Activated CD4-positive, alpha-beta memory T cell treated with anti-CD3 and anti-CD28 coated beads, Interleukin-2, amount 10 ng/mL, durations not matched to agents 7 days and 5 days (primary cell): ENCODE measurements at regions of chr6 and their contacts with region 1.

Region 1: DNA sequence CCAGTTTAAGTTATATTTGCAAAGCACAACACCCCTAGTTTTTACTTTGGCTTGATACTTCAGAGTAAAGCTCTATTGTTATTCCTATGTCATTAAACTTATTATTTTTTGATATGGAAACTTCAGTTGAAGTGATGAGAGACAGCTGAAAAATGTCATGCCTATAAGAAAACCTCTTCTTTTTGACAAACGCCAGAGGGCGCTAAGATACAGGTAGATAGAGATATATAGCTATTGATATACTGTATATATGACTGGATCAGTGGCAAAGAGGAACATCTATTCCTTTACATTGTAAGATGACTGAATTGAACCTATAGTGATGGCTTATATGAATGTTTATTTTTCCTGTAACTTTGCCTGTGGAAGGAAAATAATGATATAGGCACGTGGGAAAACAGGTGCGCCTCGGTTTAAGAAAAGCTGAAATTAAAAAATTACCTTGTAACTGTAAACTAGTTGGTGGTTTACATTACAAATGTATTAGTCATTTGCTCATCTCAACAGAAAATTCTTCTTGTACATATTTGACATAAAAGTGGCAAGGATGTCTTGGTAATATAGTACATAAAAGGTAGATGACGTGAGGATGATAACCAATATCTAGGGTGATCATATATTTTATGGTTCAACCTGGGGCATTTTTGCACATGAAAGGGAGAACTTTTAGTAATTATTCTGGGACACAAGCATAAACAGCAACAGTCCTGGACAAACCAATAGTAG is 74.1 kb downstream of the LAMA4 start:
- DNase-seq: peak; percentile 53
- H3K4me3 Mint-ChIP-seq: no peak overlapping the region
- H3K27ac Mint-ChIP-seq: no peak overlapping the region
- H3K4me1 Mint-ChIP-seq: no peaks in the 10 kb centered on the region
- H3K27me3 Mint-ChIP-seq: peaks cover 52% of the 10 kb centered on the region

Region 2: GRCh38 chr6:112163295-112164257 is 16.7 kb before region 1 on chr6:
- CTCF ChIA-PET with region 1: interaction called, 11 read pairs
- POLR2A ChIA-PET with region 1: no interaction called
- DNase-seq: peak; percentile 77
- H3K4me3 Mint-ChIP-seq: peak overlapping the region; percentile 46
- H3K27ac Mint-ChIP-seq: peak overlapping the region; percentile 28
- H3K4me1 Mint-ChIP-seq: peaks cover 18% of the 10 kb centered on the region
- H3K27me3 Mint-ChIP-seq: peaks cover 59% of the 10 kb centered on the region

Region 3: DNA sequence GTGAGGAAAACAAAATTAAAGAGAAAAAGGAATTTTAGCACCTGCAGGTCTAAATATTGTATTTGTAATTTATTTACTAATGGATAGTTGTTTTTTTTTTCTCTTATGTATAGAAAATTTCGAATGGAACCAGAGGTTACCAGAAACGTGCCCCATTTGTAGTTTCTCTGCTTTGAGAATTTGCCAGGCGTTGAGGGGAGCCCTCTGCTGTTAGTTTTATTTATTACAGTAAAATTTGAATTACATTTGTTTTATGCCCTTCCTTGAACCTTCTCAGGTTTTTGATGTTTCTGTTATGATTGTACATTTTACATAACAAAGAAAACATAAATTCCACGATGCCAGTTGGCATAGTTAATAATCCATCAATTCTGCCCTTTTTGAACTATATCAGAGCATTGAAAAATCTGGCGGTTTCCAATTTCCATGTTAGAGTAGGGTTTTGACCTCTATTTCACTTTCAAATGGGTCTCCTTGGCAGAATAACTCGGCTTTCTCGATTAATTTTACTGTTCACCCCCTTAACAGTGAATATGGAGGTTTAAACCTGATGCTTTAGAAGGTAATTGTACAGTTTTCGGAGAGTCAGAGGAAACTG is 131.8 kb after region 1 on chr6:
- CTCF ChIA-PET with region 1: interaction called, 55 read pairs
- POLR2A ChIA-PET with region 1: interaction called, 3 read pairs
- DNase-seq: no peak
- H3K4me3 Mint-ChIP-seq: no peak overlapping the region
- H3K27ac Mint-ChIP-seq: no peak overlapping the region
- H3K4me1 Mint-ChIP-seq: no peaks in the 10 kb centered on the region
- H3K27me3 Mint-ChIP-seq: peaks cover 37% of the 10 kb centered on the region

Region 4: DNA sequence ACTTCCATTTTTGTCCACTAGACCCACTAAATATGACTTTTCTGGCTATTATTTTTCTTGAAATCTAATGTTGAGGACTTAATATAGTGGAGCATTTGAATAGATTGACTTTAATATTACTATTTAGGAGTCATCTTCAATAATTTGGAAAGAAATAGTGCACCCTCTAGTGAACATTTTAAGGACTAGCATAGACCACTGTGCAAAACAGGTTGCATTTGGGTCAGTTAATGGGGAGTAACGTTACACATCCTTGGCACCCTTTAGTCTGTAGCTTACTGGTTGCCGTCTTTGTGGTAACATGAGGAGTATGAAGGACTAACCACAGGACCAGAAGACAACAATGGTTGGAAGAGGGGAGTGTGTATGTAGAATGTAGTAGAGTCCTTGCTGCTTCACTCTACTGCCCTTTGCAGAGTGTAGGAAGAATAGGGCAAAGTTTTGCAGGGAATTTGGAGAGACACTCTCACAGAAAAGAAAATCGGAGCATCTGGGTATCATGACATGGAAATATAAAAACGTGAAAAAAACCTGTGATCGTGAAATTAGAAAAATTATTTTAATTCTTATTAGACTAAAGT is 192.1 kb after region 1 on chr6:
- CTCF ChIA-PET with region 1: interaction called, 10 read pairs
- POLR2A ChIA-PET with region 1: no interaction called
- DNase-seq: no peak
- H3K4me3 Mint-ChIP-seq: no peak overlapping the region
- H3K27ac Mint-ChIP-seq: no peak overlapping the region
- H3K4me1 Mint-ChIP-seq: no peaks in the 10 kb centered on the region
- H3K27me3 Mint-ChIP-seq: peaks cover 20% of the 10 kb centered on the region